Adrenal gland (tissue), 19 donors: ENCODE measurements at regions of chr19 and their contacts with region 1.

Region 1: DNA sequence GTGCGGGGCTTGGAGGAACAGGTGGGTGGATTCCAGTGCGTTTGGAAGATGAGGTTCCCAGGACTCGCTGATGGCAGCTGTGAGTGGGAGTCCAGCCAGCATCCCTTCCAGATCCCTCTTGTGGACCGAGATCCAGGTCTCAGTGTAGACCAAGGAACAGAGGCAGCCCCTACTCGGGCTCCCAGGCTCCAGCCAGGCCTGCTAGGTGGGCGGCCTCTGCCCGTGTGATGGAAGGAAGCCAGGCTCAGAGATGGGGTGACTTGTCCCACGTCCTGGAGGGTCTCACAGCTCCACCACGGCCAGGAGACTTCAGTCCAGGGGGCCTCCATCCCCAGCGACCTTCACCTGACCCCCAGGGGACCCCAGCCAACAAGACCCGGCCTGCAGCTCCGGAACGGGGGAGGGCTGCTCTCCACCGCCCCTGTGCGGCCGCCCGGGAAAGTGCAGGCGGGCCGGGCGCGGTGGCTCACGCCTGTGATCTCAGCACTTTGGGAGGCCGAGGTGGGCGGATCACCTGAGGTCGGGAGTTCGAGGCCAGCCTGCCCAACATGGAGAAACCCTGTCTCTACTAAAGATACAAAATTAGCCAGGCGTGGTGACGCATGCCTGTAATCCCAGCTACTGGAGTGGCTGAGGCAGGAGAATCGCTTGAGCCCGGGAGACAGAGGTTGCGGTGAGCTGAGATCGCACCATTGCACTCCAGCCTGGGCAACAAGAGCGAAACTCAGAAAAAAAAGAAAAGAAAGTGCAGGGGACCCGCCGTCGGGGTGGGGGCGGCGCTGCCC is 692 bp upstream of the MADCAM1 start:
- DNase-seq: peak in 1 of 7 donors; percentile 44
- H3K4me3 ChIP-seq: no peak overlapping the region
- H3K27ac ChIP-seq: no peak overlapping the region
- H3K4me1 ChIP-seq: peaks cover 2 to 9% of the 10 kb centered on the region in 2 donors
- H3K27me3 ChIP-seq: peaks cover 19% of the 10 kb centered on the region
- CTCF ChIP-seq: peak; percentile 56 to 70 (median 64)
- POLR2A ChIP-seq: no peak

Region 2: GRCh38 chr19:344625-345319 is 150.8 kb before region 1 on chr19 and contains the start of gene MIER2:
- intact Hi-C with region 1: loop called in 1 of 2 experiments (anchors 10 kb)
- DNase-seq: peak; percentile 75 to 88 (median 80)
- H3K4me3 ChIP-seq: peak within 1 kb of the TSS in 3 of 4 donors; percentile 23 to 100 (median 67)
- H3K27ac ChIP-seq: peak within 1 kb of the TSS in 3 of 5 donors; percentile 48 to 89 (median 59)
- H3K4me1 ChIP-seq: peaks cover 11 to 27% of the 10 kb centered on the region in 2 donors
- H3K27me3 ChIP-seq: no peaks in the 10 kb centered on the region
- CTCF ChIP-seq: no peak
- POLR2A ChIP-seq: no peak
- total RNA-seq, gene MIER2: 10.8 to 24.2 (median 14.3) TPM

Region 3: GRCh38 chr19:435056-435706 is 60.4 kb before region 1 on chr19:
- intact Hi-C with region 1: no loop called
- DNase-seq: no peak
- H3K4me3 ChIP-seq: no peak overlapping the region
- H3K27ac ChIP-seq: no peak overlapping the region
- H3K4me1 ChIP-seq: no peaks in the 10 kb centered on the region
- H3K27me3 ChIP-seq: no peaks in the 10 kb centered on the region
- CTCF ChIP-seq: no peak
- POLR2A ChIP-seq: no peak